SK-N-SH (cell line): ENCODE measurements at regions of chr3 and their contacts with region 1.

Region 1: GRCh38 chr3:36729204-36730056 is 34.9 kb downstream of the DCLK3 start:
- DNase-seq: peak; percentile 54
- H3K4me3 ChIP-seq: no peak overlapping the region; a peak in 1 of 4 replicates
- H3K27ac ChIP-seq: no peak overlapping the region
- H3K4me1 ChIP-seq: peaks cover 0 to 12% of the 10 kb centered on the region in 2 experiments; a peak in 2 of 4 replicates
- H3K27me3 ChIP-seq: no peaks in the 10 kb centered on the region
- CTCF ChIP-seq: peak; percentile 82
- EP300 ChIP-seq: no peak
- RAD21 ChIP-seq: peak; percentile 96

Region 2: GRCh38 chr3:36876181-36876936 is 146.9 kb after region 1 on chr3:
- CTCF ChIA-PET with region 1: interaction called, 182 read pairs
- POLR2A ChIA-PET with region 1: no interaction called
- DNase-seq: no peak
- H3K4me3 ChIP-seq: no peak overlapping the region
- H3K27ac ChIP-seq: no peak overlapping the region
- H3K4me1 ChIP-seq: no peaks in the 10 kb centered on the region
- H3K27me3 ChIP-seq: no peaks in the 10 kb centered on the region
- CTCF ChIP-seq: no peak
- EP300 ChIP-seq: no peak
- RAD21 ChIP-seq: no peak